ENCODE measurements at regions of chr12 and their contacts with region 1.

Region 1: GRCh38 chr12:52884526-52885293 is 20.2 kb downstream of the KRT8 start:
- DNase-seq: peak; percentile 86
- ATAC-seq: peak; percentile 86

Region 2: DNA sequence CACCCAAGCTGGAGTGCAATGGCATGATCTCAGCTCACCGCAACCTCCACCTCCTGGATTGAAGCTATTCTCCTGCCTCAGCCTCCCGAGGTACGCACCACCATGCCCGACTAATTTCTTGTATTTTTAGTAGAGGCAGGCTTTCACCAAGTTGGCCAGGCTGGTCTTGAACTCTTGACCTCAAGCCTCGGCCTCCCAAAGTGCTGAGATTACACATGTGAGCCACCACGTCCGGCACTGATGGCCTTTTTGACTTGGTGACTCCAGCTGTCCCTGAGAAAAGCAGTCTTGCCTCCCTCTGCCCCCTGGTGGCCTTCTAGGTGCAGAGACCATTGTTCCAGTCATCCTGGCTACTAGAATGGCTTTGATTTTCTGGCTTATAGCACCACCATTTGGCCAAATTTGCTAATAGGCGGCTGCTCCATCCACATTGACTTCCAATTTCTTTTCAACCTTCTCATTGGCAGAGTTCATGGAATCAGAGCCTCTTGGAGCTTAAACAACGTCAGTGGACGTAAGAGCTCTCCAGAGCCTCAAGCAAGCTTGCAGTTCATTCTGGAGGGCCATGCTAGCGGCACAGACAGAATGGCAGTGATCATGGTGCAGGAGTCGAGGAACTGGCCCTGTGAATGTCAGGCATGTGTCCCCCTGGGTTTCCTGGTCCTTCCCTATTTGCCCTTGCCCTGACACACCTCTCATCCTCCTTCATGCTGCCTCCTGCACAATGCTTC is 96.1 kb after region 1 on chr12:
- intact Hi-C with region 1: loop called (anchors 2 kb)
- DNase-seq: peak; percentile 85
- ATAC-seq: peak; percentile 95

Region 3: GRCh38 chr12:53014709-53015108 is 130.0 kb after region 1 on chr12:
- intact Hi-C with region 1: no loop called
- DNase-seq: no peak
- ATAC-seq: no peak